GM10248 (cell line): ENCODE measurements at regions of chr1 and their contacts with region 1.

Region 1: DNA sequence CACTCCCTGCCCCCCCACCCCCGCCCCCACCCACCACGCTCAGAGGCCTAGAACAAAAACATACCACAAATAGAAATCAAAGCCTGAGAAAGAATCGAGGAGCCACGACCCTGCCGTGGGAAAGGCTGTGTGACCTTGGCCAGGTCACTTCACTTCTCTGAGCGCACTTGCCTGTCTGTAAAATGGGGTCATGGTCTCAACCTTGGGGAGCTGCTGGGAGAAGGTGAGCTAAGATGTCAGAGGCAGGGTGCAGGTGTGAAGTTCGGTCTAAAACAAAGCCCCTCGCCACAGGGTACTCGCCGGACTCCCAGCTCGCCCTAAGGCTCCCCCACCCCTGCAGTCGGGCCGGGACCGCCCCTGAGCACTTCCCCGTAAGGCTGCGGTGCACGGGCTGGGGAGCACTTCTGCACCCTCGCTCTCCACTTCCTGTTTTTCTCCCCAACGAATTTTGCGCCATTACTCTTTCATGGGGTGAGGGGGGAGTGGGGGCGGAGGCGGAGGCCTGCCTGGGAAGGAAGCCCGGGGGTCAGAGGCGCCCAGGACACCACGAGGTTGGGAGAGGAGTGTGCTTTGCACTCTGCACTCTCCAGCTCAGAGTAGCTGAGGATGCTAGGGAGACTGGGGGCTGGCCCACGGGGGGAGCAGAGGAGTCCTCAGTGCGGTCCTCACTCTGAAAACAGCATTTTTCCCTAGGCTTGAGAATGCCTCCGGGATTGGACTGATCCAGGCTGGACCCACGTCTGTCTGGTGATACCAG is 21.9 kb upstream of the PIK3CD start:
- DNase-seq: peak; percentile 82
- CTCF ChIP-seq: no peak

Region 2: DNA sequence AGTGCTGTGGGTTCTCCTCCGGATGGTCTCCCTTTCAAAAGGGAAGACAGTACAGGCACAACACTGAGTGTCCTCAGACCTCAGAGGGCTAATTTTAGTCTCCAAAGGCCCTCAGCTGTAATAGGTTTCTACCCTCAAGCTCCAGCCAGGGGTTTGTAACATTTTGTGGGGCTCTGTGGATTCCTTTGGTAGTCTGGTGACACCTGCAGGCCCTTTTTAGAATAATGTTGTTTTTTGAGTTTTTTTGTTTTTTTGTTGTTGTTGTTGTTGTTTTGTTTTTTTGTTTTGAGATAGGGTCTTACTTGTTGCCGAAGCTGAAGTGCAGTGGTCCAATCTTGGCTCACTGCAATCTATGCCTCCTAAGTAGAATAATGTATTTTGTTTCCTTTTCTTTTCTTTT is 55.9 kb before region 1 on chr1:
- CTCF ChIA-PET with region 1: no interaction called
- POLR2A ChIA-PET with region 1: no interaction called
- DNase-seq: peak; percentile 28
- CTCF ChIP-seq: no peak

Region 3: GRCh38 chr1:9615316-9616063 is 14.1 kb before region 1 on chr1:
- CTCF ChIA-PET with region 1: interaction called, 37 read pairs
- POLR2A ChIA-PET with region 1: interaction called, 3 read pairs
- DNase-seq: peak; percentile 83
- CTCF ChIP-seq: peak; percentile 86

Region 4: GRCh38 chr1:9651565-9652378 is 22.1 kb after region 1 on chr1 and contains the start of gene PIK3CD:
- CTCF ChIA-PET with region 1: interaction called, 117 read pairs
- POLR2A ChIA-PET with region 1: interaction called, 26 read pairs
- DNase-seq: no peak
- CTCF ChIP-seq: no peak

Region 5: GRCh38 chr1:9671377-9672140 is 41.9 kb after region 1 on chr1:
- CTCF ChIA-PET with region 1: interaction called, 27 read pairs
- POLR2A ChIA-PET with region 1: interaction called, 3 read pairs
- DNase-seq: no peak
- CTCF ChIP-seq: no peak

Region 6: DNA sequence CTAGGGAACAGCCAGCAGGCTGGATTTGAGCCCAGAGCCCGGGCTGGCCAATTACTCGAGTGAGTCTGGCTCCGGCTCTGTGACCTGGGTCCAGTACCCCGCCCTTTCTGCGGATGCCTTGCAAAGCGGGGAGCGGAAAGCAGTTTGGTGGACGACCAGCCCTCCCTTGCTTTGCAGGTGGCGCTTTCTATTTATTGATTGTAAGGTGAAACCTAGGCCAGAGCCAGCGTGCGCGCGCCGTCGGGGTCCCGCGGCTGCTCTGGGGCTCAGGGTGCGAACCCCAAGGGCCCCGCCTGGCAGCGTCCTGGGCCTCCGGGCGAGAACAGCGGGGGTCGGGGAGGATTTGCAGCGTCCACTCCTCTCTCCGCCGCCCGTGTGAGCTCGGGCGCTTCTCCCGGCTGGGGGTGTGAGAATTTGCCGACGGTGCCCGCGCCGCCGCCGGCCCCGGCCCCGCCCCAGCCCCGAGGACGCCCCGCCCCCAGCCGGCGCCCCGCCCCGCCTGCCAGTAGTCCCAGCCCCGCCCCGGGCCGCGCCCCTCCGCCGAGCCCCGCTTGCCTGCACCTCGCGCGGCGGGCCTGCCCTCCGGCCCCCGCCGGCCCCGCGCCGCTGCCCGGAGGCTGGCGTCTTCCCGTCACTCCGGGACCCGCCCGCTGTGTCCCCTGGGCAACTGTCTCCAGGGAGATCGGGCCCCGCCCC is 59.5 kb after region 1 on chr1:
- CTCF ChIA-PET with region 1: interaction called, 18 read pairs
- POLR2A ChIA-PET with region 1: no interaction called
- DNase-seq: peak; percentile 93
- CTCF ChIP-seq: no peak

Region 7: DNA sequence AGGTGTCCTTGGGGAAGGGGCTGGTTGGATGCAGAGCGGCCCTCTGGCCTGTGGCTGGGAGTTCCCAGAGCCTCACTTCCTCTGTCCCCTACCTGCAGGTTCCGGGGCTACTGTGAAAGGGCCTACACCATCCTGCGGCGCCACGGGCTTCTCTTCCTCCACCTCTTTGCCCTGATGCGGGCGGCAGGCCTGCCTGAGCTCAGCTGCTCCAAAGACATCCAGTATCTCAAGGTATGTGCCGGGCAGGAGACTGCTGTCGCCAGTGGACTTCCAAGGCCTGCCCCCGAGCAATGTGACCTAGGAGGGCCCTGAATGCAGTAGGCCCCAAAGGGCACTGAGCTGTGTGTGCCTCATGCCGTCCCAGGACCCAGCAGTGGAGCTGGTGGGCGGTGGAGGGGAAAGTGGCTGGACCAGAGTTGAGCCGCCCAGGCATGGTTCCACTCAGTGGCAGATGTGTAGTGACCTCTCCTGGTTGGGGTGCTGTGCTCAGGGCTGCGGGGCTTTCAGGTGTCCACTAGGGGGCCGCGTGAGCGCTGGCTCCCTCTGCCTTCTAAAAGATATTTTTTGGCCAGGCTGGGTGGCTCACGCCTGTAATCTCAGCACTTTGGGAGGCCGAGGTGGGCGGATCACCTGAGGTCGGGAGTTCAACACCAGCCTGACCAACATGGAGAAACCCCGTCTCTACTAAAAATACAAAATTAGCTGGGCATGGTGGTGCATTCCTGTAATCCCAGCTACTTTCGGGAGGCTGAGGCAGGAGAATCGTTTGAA is 95.3 kb after region 1 on chr1:
- CTCF ChIA-PET with region 1: interaction called, 24 read pairs
- POLR2A ChIA-PET with region 1: interaction called, 3 read pairs
- DNase-seq: peak; percentile 86
- CTCF ChIP-seq: peak; percentile 98